ENCODE measurements at regions of chr10 and their contacts with region 1.

Region 1: GRCh38 chr10:27742195-27743011 is 3.2 kb downstream of the MKX start:
- DNase-seq: peak; percentile 77
- H3K4me3 Mint-ChIP-seq: peak overlapping the region; percentile 45
- H3K27ac Mint-ChIP-seq: no peak overlapping the region
- H3K4me1 Mint-ChIP-seq: peaks cover 25% of the 10 kb centered on the region
- H3K27me3 Mint-ChIP-seq: peaks cover 65% of the 10 kb centered on the region

Region 2: GRCh38 chr10:26215935-26216584 is 1526.3 kb before region 1 on chr10:
- intact Hi-C with region 1: loop called (anchors 5 kb)
- DNase-seq: no peak
- H3K4me3 Mint-ChIP-seq: no peak overlapping the region
- H3K27ac Mint-ChIP-seq: no peak overlapping the region
- H3K4me1 Mint-ChIP-seq: peaks cover 18% of the 10 kb centered on the region
- H3K27me3 Mint-ChIP-seq: peaks cover 85% of the 10 kb centered on the region

Region 3: DNA sequence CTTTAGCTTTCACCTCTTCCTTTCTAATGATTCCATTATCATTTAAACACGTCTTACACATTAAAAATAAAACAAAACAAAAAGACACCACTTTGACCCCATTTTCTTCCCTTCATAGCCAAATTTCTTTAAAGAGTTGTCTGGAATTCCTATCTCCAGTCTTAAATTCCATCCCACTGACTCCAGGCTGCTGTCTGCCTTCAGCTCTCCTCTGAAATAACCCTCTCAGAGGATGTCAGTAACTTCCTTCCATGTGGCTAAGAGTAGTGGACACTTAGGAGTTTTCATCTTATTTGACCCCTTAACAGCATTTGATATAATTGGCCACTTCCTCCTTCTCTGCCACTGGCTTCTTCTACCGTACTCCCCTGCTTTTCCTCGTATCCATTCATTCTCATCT is 72.9 kb after region 1 on chr10:
- intact Hi-C with region 1: no loop called
- DNase-seq: no peak
- H3K4me3 Mint-ChIP-seq: no peak overlapping the region
- H3K27ac Mint-ChIP-seq: no peak overlapping the region
- H3K4me1 Mint-ChIP-seq: no peaks in the 10 kb centered on the region
- H3K27me3 Mint-ChIP-seq: no peaks in the 10 kb centered on the region

Region 4: GRCh38 chr10:27998254-27999004 is 256.0 kb after region 1 on chr10:
- intact Hi-C with region 1: loop called (anchors 2 kb)
- DNase-seq: no peak
- H3K4me3 Mint-ChIP-seq: peak overlapping the region; percentile 75
- H3K27ac Mint-ChIP-seq: no peak overlapping the region
- H3K4me1 Mint-ChIP-seq: peaks cover 8% of the 10 kb centered on the region
- H3K27me3 Mint-ChIP-seq: peaks cover 43% of the 10 kb centered on the region

Region 5: GRCh38 chr10:28179006-28179742 is 436.8 kb after region 1 on chr10:
- intact Hi-C with region 1: loop called (anchors 1 kb)
- DNase-seq: peak; percentile 18
- H3K4me3 Mint-ChIP-seq: no peak overlapping the region
- H3K27ac Mint-ChIP-seq: peak overlapping the region; percentile 87
- H3K4me1 Mint-ChIP-seq: peaks cover 20% of the 10 kb centered on the region
- H3K27me3 Mint-ChIP-seq: peaks cover 6% of the 10 kb centered on the region

Region 6: GRCh38 chr10:28241741-28242399 is 499.5 kb after region 1 on chr10:
- intact Hi-C with region 1: loop called (anchors 2 kb)
- DNase-seq: no peak
- H3K4me3 Mint-ChIP-seq: no peak overlapping the region
- H3K27ac Mint-ChIP-seq: no peak overlapping the region
- H3K4me1 Mint-ChIP-seq: peaks cover 3% of the 10 kb centered on the region
- H3K27me3 Mint-ChIP-seq: peaks cover 13% of the 10 kb centered on the region

Region 7: GRCh38 chr10:28676968-28677887 is 934.8 kb after region 1 on chr10 and contains the start of gene BAMBI:
- intact Hi-C with region 1: loop called (anchors 10 kb)
- DNase-seq: peak; percentile 88
- H3K4me3 Mint-ChIP-seq: peak within 1 kb of the TSS; percentile 74
- H3K27ac Mint-ChIP-seq: no peak within 1 kb of the TSS
- H3K4me1 Mint-ChIP-seq: peaks cover 26% of the 10 kb centered on the region
- H3K27me3 Mint-ChIP-seq: peaks cover 73% of the 10 kb centered on the region
- total RNA-seq, gene BAMBI: 0.16 TPM in 2 replicates

Measured in activated T-helper 2 cell treated with anti-CD3 and anti-CD28 coated beads, Interferon-gamma antibody, Interleukin-2, Interleukin-4, amounts not matched to agents 10 μg/mL and 5 μg/mL and 100 μg/mL, durations not matched to agents 14 hours and 24 hours and 36 hours (primary cell).